Panc1 (cell line): ENCODE measurements at regions of chr1 and their contacts with region 1.

Region 1: DNA sequence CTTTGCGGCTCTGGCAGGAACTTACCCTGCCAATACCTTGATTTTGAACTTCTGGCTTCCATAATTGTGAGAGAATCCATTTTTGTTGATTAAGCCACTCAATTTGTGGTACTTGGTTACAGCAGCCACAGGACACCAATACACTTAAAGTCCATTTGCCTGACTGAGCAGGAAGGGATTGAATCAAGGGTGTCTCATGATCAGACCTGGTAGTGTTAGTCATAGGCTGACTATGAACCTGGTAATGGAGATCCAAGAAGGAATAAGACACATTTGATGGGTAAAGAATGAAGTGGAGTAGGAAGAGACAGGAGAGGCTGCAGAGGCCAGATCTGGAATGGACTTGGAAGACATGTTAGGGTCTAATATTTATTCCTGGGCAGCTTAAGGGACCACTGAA is 31.2 kb upstream of the MAP1LC3C start:
- DNase-seq: no peak
- ATAC-seq: no peak
- H3K4me3 ChIP-seq: no peak overlapping the region
- H3K27ac ChIP-seq: no peak overlapping the region
- H3K4me1 ChIP-seq: no peaks in the 10 kb centered on the region
- H3K27me3 ChIP-seq: no peaks in the 10 kb centered on the region
- CTCF ChIP-seq: no peak

Region 2: DNA sequence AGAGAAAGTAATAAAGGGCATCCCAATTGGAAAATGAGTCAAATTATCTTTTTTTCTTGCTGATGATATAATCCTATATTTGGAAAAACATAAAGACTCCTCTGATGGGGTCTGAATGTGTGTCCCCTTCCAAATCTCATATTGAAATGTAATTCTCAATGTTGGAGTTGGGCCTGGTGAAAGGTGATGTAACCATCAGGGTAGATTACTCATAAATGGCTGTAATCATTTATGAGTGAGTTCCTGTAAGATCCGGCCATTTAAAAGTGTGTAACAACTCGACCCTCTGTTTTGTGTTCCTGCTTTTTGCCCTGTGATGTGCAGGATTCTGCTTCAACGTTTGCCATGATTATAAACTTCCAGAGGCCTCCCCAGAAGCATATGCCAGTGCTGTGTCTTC is 13.1 kb after region 1 on chr1:
- CTCF ChIA-PET with region 1: interaction called, 14 read pairs
- POLR2A ChIA-PET with region 1: no interaction called
- in situ Hi-C with region 1: no loop called
- intact Hi-C with region 1: no loop called
- DNase-seq: no peak
- ATAC-seq: no peak
- H3K4me3 ChIP-seq: no peak overlapping the region
- H3K27ac ChIP-seq: peak overlapping the region; percentile 34; the same call in 1 of the 2 replicates
- H3K4me1 ChIP-seq: no peaks in the 10 kb centered on the region
- H3K27me3 ChIP-seq: no peaks in the 10 kb centered on the region
- CTCF ChIP-seq: no peak

Region 3: GRCh38 chr1:242162140-242162539 is 132.1 kb after region 1 on chr1:
- CTCF ChIA-PET with region 1: no interaction called
- POLR2A ChIA-PET with region 1: no interaction called
- in situ Hi-C with region 1: no loop called
- intact Hi-C with region 1: no loop called
- DNase-seq: no peak
- ATAC-seq: no peak
- H3K4me3 ChIP-seq: no peak overlapping the region
- H3K27ac ChIP-seq: no peak overlapping the region; the same call in 1 of the 2 replicates
- H3K4me1 ChIP-seq: no peaks in the 10 kb centered on the region
- H3K27me3 ChIP-seq: no peaks in the 10 kb centered on the region
- CTCF ChIP-seq: no peak